ENCODE measurements at regions of chr19 and their contacts with region 1.

Region 1: GRCh38 chr19:11766597-11767591 is at the start of gene ZNF441:
- DNase-seq: peak; percentile 98
- ATAC-seq: peak; percentile 98 to 100 (median 99)
- H3K4me3 ChIP-seq: peak within 1 kb of the TSS; percentile 54 to 95 (median 84)
- H3K27ac ChIP-seq: peak within 1 kb of the TSS; percentile 82 to 97 (median 93)
- H3K4me1 ChIP-seq: peaks cover 3 to 20% (median 16%) of the 10 kb centered on the region in 9 donors
- H3K27me3 ChIP-seq: no peaks in the 10 kb centered on the region
- CTCF ChIP-seq: no peak
- total RNA-seq, gene ZNF441: 2.8 to 7.0 (median 5.2) TPM

Region 2: DNA sequence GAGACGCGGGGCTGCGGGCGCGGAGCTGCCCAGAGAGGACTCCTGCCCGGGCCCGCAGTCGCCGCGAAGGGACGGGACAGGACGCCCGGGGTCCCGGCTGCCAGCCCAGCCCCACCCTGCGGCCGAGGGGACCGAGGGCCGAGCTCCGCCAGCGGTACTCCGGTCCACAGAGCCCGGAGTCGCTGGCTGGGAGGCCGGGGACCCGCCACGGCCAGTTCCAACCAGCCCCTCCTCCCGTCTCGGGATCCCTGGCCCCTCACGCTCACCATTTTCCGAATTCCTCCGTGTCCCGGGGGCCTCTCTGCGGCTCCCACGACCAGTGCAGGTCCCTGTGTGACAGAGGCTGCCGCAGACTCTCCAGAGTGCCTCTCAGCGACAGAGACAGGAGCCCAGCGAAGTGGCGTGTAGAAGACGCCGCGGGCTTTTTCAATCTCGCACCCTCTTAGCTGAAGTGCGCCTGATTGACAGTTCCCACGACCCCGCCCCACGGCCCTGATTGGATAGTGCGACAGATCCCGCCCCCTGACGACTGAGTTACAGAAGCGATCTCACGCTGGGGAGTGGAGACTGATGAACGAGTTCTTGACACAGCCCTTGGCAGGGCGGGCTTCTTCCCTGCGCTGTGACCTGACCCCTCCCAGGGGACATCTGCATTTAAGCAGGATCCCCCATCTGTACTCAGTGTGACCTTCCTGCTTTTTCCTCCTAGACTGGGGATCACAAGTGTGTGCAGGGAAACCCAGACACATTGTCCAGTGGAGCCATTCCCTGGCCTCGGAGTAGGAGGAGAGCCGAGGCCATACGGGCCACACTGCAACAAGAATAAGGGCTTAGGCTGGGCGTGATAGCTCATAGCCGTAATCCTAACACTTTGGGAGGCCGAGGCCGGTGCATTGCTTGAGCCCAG is 72.1 kb before region 1 on chr19:
- intact Hi-C with region 1: loop called in 1 of 10 experiments (anchors 5 kb)
- DNase-seq: peak; percentile 96 to 97
- ATAC-seq: peak; percentile 99 to 100 (median 100)
- H3K4me3 ChIP-seq: peak overlapping the region; percentile 66 to 93 (median 77)
- H3K27ac ChIP-seq: peak overlapping the region in 9 of 10 donors; percentile 32 to 68 (median 54)
- H3K4me1 ChIP-seq: peaks cover 0 to 17% (median 10%) of the 10 kb centered on the region in 9 donors
- H3K27me3 ChIP-seq: no peaks in the 10 kb centered on the region
- CTCF ChIP-seq: no peak

Region 3: GRCh38 chr19:11699931-11700794 is 66.7 kb before region 1 on chr19:
- intact Hi-C with region 1: loop called in 2 of 10 experiments (anchors 5 kb)
- DNase-seq: no peak
- ATAC-seq: peak in 1 of 8 donors; percentile 44
- H3K4me3 ChIP-seq: no peak overlapping the region
- H3K27ac ChIP-seq: no peak overlapping the region
- H3K4me1 ChIP-seq: peaks cover 0 to 3% (median 1%) of the 10 kb centered on the region in 9 donors
- H3K27me3 ChIP-seq: no peaks in the 10 kb centered on the region
- CTCF ChIP-seq: peak; percentile 33 to 79 (median 65)